Activated T-helper 1 cell treated with anti-CD3 and anti-CD28 coated beads, Interleukin-12 subunit alpha, Interleukin-12 subunit beta, Interleukin-2, Interleukin-4 antibody, amounts not matched to agents 30 ng/mL and 10 ng/mL and 1 ng/mL, durations not matched to agents 14 hours and 24 hours and 36 hours (primary cell): ENCODE measurements at regions of chr17 and their contacts with region 1.

Region 1: GRCh38 chr17:7572588-7573323 is 6.7 kb upstream of the CD68 start:
- DNase-seq: peak; percentile 100
- H3K4me3 Mint-ChIP-seq: peak overlapping the region; percentile 94
- H3K27ac Mint-ChIP-seq: peak overlapping the region; percentile 100
- H3K4me1 Mint-ChIP-seq: peaks cover 54% of the 10 kb centered on the region
- H3K27me3 Mint-ChIP-seq: peaks cover 2% of the 10 kb centered on the region

Region 2: DNA sequence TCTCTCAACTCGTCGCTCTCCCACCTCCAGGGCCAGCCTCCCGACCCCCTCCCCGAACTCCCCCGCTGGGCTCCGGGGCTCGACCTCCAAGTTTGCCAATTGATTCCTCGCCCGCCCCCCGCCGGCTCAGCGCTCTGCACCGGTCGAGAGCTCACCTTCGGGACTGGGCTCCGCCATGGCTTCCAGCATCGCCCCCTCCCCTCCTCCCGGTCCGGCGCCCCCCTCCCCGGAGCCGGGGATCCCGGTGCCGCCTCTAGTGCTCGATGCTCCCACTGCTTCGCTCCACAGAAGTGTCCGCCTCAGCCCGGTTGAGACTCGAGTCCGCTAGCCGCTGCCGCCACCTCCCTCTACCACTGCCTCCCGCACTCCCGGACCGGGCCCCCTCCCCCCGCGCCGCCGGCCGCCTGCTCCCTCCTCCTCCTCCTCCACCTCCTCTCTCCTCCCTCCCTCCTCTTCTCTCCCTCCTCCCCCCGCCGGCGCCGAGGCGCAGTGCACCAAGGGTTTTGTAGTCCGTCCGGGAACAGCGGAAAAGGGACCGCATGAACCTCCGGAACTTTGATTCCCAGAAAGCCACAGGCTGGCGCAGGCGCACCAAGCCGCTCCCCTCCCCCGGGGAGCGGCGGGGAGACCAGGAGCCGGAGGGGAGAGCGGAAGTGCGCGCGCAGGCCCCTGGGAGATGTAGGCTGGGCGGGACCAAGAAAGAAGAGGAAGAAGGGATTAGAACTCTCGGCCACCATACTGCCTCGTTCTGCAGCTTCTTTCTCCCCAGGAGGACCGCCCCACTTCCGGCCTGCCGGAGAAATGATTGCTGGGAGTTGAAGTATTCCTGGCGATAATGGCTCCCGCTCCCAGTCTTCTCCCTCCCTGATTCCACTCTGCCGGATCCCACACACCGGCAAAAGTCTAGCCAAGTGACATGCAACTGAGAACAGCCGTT is 333.4 kb before region 1 on chr17 and contains the start of gene PHF23:
- intact Hi-C with region 1: loop called (anchors 2 kb)
- DNase-seq: peak; percentile 98
- H3K4me3 Mint-ChIP-seq: peak within 1 kb of the TSS; percentile 97
- H3K27ac Mint-ChIP-seq: peak within 1 kb of the TSS; percentile 94
- H3K4me1 Mint-ChIP-seq: peaks cover 68% of the 10 kb centered on the region
- H3K27me3 Mint-ChIP-seq: no peaks in the 10 kb centered on the region
- total RNA-seq, gene PHF23: 52.5 and 55.4 TPM in 2 replicates

Region 3: DNA sequence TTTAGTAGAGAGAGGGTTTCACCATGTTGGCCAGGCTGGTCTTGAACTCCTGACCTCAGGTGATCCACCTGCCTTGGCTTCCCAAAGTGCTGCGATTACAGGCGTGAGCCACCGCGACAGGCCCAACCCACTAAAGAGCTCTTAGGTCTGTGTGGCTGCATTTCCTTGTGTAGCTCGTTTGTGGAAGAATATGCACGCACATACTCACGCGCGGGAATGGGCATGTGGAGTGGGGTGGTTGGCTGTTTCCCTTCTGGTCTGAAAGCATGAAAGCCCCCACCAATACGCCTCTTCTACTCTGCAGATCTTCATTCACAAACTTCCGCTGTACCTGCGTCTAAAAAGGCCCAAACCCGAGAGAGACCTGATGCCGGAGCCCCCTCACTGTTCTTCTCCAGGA is 117.8 kb before region 1 on chr17:
- intact Hi-C with region 1: loop called (anchors 2 kb)
- DNase-seq: no peak
- H3K4me3 Mint-ChIP-seq: peak overlapping the region; percentile 87
- H3K27ac Mint-ChIP-seq: peak overlapping the region; percentile 88
- H3K4me1 Mint-ChIP-seq: peaks cover 31% of the 10 kb centered on the region
- H3K27me3 Mint-ChIP-seq: no peaks in the 10 kb centered on the region

Region 4: GRCh38 chr17:7496470-7497183 is 76.1 kb before region 1 on chr17:
- intact Hi-C with region 1: no loop called
- DNase-seq: no peak
- H3K4me3 Mint-ChIP-seq: no peak overlapping the region
- H3K27ac Mint-ChIP-seq: no peak overlapping the region
- H3K4me1 Mint-ChIP-seq: peaks cover 19% of the 10 kb centered on the region
- H3K27me3 Mint-ChIP-seq: no peaks in the 10 kb centered on the region

Region 5: DNA sequence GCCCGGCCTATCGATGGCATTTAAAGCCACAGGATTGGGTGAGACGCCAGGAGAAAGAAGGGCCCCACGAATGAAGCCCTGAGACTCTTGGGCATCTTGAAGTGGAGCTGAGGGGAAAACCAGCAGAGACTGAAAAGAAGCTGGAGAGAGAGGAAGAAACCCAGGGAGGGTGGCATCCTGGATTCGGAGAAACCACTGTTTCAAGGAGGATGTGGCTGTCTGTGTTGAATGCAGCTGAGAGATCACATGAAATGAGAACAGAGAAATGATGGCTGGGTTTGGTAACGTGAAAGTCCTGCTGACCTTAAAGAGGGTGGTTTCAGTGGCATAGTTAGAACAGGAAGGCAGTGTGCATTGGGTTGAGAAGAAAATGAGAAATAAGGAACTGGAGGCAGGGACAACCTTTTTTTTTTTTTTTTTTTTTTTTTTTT is 20.1 kb before region 1 on chr17:
- intact Hi-C with region 1: no loop called
- DNase-seq: peak; percentile 56
- H3K4me3 Mint-ChIP-seq: peak overlapping the region; percentile 61
- H3K27ac Mint-ChIP-seq: peak overlapping the region; percentile 90
- H3K4me1 Mint-ChIP-seq: peaks cover 72% of the 10 kb centered on the region
- H3K27me3 Mint-ChIP-seq: no peaks in the 10 kb centered on the region

Region 6: DNA sequence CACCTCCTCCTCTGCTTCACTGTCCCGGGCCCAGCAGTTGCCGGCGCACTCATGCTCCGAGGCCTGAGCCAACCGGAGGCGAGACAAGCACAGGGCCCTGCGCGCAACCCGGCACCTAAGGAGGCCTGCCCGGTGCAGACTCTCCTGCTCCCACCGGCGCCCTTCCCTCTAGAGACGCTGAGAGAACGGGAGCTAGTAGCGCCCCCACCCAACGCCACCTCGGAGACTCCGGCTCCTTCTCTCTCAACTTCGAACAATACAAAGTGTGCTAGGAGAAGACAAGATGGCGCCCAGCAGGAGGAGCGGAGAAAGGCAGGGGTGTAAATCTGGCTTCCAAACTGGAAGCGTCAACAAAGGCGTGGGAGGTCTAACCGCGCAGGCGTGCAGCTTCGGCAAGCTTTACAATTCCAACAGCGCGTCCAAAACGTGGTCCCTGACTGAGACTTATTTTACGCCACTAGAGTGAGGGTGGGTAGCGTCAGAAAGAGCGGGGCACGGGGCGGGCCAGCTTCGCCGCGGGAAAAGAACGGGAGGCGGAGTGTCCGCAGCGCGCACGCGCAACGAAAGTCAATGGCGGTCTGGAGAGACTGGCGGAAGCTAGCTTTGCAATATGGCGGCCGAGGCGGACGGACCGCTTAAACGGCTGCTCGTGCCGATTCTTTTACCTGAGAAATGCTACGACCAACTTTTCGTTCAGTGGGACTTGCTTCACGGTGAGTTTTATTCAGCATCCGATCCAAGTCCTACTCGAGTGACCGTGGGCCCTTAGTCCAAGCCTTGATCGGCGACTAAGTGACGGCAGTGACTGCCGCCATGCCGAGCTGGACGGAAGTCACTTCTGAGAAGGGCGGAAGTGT is 10.7 kb after region 1 on chr17 and contains the start of gene MPDU1:
- intact Hi-C with region 1: loop called (anchors 1 kb)
- DNase-seq: peak; percentile 95
- H3K4me3 Mint-ChIP-seq: peak within 1 kb of the TSS; percentile 98
- H3K27ac Mint-ChIP-seq: peak within 1 kb of the TSS; percentile 100
- H3K4me1 Mint-ChIP-seq: peaks cover 54% of the 10 kb centered on the region
- H3K27me3 Mint-ChIP-seq: no peaks in the 10 kb centered on the region
- total RNA-seq, gene MPDU1: 108 and 111 TPM in 2 replicates

Region 7: DNA sequence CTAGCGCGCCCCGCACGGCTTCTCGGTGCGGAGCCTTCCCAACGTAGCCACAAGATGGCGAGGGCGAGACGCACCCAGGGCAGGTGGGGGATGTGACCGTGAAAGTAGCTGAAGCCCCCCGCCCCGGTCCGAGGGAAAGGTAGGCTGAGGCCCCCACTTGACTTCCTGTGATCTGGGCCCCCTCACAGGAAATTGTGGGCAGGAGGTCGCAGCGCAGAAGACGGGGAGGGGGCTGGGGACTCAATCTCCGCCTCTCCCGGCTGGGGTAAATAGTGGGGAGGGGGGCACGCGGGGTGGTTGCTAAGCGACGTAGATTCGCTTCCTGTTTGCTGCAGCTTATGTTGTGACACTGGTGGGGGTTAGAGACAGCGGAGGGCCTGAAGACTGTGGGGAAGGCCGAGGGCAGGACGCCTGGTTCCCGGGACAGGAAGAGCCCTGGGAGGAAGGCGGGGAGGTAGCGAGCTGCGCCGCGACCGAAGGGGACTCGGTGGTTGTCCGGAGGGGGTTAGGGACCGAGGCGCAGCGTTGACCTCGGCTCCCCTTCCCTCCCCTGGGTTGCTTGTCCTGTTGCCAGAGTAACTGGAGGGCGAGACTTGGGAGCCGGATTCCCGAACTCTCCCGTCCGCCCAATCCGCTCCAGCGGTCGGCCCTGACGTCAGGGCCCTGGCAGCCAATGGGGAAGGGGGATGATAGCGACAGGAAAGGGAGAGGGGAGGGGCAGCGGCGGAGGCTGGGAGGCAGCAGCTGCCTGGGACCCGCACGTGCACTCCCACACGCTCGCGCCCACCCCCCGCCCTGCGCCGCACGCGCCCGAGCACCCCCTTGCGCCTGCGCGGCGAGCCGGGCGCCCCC is 262.4 kb after region 1 on chr17:
- intact Hi-C with region 1: loop called (anchors 2 kb)
- DNase-seq: peak; percentile 75
- H3K4me3 Mint-ChIP-seq: peak overlapping the region; percentile 96
- H3K27ac Mint-ChIP-seq: peak overlapping the region; percentile 96
- H3K4me1 Mint-ChIP-seq: peaks cover 46% of the 10 kb centered on the region
- H3K27me3 Mint-ChIP-seq: peaks cover 17% of the 10 kb centered on the region